Gastrocnemius medialis (tissue), 4 donors: ENCODE measurements at regions of chr19 and their contacts with region 1.

Region 1: GRCh38 chr19:4139614-4140236 is 13.7 kb upstream of the CREB3L3 start:
- DNase-seq: peak; percentile 37 to 63
- ATAC-seq: peak; percentile 62 to 87
- H3K4me3 ChIP-seq: no peak overlapping the region
- H3K27ac ChIP-seq: no peak overlapping the region
- H3K4me1 ChIP-seq: peaks cover 0 to 4% of the 10 kb centered on the region in 2 donors
- H3K27me3 ChIP-seq: no peaks in the 10 kb centered on the region
- CTCF ChIP-seq: peak; percentile 42 to 85 (median 71)
- POLR2A ChIP-seq: no peak

Region 2: GRCh38 chr19:3995627-3996026 is 144.1 kb before region 1 on chr19:
- in situ Hi-C with region 1: loop called in 2 of 4 experiments (anchors 10 to 25 kb)
- intact Hi-C with region 1: no loop called
- DNase-seq: no peak
- ATAC-seq: no peak
- H3K4me3 ChIP-seq: no peak overlapping the region
- H3K27ac ChIP-seq: no peak overlapping the region
- H3K4me1 ChIP-seq: no peaks in the 10 kb centered on the region
- H3K27me3 ChIP-seq: no peaks in the 10 kb centered on the region
- CTCF ChIP-seq: no peak
- POLR2A ChIP-seq: no peak

Region 3: DNA sequence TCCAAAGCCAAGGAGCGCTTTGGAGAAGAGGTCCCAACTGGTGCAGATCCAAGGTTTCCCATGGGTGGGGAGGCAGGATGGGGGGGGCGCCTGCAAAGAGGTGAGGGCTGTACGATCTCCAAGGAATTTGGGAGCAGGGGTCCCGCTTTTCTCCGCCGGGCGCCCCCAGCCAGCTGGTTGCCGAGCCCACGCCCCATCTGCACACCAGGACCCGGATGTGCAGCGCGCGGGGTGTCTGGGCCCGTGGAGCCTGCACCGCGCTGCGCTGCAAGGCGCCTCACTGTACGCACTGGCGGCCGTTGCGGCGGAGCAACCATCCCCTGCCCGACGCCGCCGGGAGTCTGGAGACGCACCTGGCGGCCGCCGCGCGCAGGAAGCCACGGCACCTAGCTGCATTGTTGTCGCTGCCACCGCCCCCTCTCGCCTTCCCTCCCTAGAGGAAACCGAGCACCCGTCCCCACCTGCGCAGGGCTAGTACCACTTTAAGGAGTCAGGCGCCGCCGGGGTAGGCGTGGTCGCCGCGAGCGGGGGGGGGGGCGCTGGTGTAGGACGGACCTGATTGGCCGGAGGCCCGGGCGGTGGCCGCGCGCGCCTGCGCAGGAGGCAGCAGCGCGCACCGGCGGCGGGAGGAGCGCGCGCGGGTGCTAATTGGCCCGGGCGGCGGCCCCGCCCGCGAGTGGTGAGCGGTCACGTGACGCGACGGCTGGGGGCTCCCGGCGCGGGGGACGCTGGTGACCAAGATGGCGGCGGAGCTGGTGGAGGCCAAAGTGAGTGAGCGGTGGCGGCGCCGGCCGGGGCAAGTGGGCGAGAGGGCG is 132.5 kb before region 1 on chr19 and contains the start of gene PIAS4:
- in situ Hi-C with region 1: loop called in 1 of 4 experiments (anchors 25 kb)
- intact Hi-C with region 1: no loop called
- DNase-seq: peak; percentile 92 to 95
- ATAC-seq: peak; percentile 84 to 92
- H3K4me3 ChIP-seq: peak within 1 kb of the TSS; percentile 75 to 94 (median 86)
- H3K27ac ChIP-seq: peak within 1 kb of the TSS; percentile 86 to 96 (median 88)
- H3K4me1 ChIP-seq: peaks cover 41 to 44% of the 10 kb centered on the region in 2 donors
- H3K27me3 ChIP-seq: no peaks in the 10 kb centered on the region
- CTCF ChIP-seq: peak in 2 of 5 experiments; percentile 51 to 69
- POLR2A ChIP-seq: peak in 1 of 2 donors; percentile 70
- total RNA-seq, gene PIAS4: 15.5 to 20.0 (median 17.5) TPM

Region 4: DNA sequence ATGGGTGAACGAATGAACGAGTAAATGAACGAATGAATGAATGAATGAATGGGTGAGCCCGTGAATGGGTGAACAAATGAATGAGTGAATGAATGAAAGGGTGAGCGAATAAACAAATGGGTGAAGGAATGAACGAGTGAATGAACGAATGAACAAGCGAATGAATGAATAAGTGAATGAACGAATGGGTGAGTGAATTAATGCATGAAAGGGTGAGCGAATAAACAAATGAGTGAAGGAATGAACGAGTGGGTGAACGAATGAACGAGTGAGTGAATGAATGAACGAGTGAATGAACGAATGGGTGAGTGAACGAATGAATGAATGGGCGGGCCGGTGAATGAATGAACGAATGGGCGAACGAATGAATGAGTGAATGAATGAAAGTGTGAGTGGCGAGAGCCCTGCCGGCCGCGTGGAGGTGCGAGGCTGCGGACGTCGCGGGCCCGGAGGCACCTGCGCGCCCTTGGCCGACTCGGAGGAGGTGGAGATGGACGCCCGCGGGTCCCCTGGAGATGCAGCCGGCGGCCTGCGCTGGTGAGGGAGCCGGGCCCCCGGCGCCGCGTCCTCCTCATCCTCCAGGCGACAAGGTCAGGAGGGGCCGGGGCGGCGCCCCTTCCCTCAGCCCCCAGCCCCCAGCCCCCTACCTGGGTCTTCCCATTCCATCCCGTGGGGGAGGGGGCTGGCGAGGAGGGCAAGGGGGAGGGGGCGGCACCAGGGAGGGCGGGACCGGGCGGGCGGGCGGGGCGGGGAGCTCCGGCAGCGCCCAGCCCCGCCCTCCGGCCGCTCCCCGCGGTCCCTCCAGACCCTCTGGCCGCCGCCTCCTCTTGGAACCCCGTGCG is 58.1 kb after region 1 on chr19:
- in situ Hi-C with region 1: no loop called
- intact Hi-C with region 1: no loop called
- DNase-seq: no peak
- ATAC-seq: no peak
- H3K4me3 ChIP-seq: no peak overlapping the region
- H3K27ac ChIP-seq: no peak overlapping the region
- H3K4me1 ChIP-seq: no peaks in the 10 kb centered on the region
- H3K27me3 ChIP-seq: peaks cover 54 to 60% (median 57%) of the 10 kb centered on the region in 3 donors
- CTCF ChIP-seq: no peak
- POLR2A ChIP-seq: no peak

Region 5: DNA sequence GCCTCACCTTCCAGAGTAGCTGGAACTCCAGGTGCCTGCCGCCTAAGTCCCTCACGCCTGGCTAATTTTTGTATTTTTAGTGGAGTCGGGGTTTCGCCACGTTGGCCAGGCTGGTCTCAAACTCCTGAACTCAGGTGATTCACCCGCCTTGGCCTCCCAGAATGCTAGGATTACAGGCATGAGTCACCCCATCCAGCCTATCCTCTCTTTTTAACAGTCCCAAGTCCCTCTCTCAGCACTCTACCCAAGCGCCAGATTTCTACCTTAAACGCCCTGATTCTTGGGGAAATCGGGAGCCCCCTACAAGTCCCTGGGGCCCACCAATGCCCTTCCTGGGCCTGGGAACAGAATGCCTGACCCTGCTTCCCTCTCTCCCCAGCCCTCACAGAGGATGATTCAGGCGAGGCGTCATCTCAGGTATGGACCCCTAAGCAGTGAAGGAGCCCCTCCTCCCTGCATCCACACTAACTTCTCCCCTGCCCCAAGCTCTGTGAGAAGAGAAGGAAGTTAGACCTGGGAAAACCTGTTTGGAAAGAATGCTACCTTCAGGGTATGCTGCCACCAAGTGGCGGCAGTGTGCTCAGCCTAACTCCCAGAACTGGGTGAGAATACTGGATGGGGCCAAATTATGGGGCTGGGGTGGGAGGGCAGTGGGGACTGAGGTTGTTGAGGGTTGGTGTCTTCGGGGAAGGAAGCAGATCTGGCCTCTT is 68.8 kb after region 1 on chr19:
- in situ Hi-C with region 1: no loop called
- intact Hi-C with region 1: loop called (anchors 1 kb)
- DNase-seq: no peak
- ATAC-seq: no peak
- H3K4me3 ChIP-seq: no peak overlapping the region
- H3K27ac ChIP-seq: no peak overlapping the region
- H3K4me1 ChIP-seq: no peaks in the 10 kb centered on the region
- H3K27me3 ChIP-seq: peaks cover 0 to 4% (median 0%) of the 10 kb centered on the region in 3 donors
- CTCF ChIP-seq: peak in 2 of 5 experiments; percentile 14 to 31
- POLR2A ChIP-seq: no peak